ENCODE measurements at regions of chr2 and their contacts with region 1.

Region 1: GRCh38 chr2:85813982-85814801 is 60.4 kb downstream of the ATOH8 start:
- DNase-seq: peak; percentile 92
- H3K4me3 Mint-ChIP-seq: no peak overlapping the region
- H3K27ac Mint-ChIP-seq: no peak overlapping the region
- H3K4me1 Mint-ChIP-seq: no peaks in the 10 kb centered on the region
- H3K27me3 Mint-ChIP-seq: peaks cover 51% of the 10 kb centered on the region

Region 2: GRCh38 chr2:85577386-85578242 is 236.6 kb before region 1 on chr2 and contains the start of gene VAMP8:
- CTCF ChIA-PET with region 1: no interaction called
- DNase-seq: peak; percentile 80
- H3K4me3 Mint-ChIP-seq: peak within 1 kb of the TSS; percentile 95
- H3K27ac Mint-ChIP-seq: peak within 1 kb of the TSS; percentile 86
- H3K4me1 Mint-ChIP-seq: peaks cover 42% of the 10 kb centered on the region
- H3K27me3 Mint-ChIP-seq: peaks cover 27% of the 10 kb centered on the region

Region 3: GRCh38 chr2:85635636-85636035 is 178.6 kb before region 1 on chr2:
- CTCF ChIA-PET with region 1: interaction called, 39 read pairs
- DNase-seq: no peak
- H3K4me3 Mint-ChIP-seq: no peak overlapping the region
- H3K27ac Mint-ChIP-seq: peak overlapping the region; percentile 5
- H3K4me1 Mint-ChIP-seq: peaks cover 4% of the 10 kb centered on the region
- H3K27me3 Mint-ChIP-seq: no peaks in the 10 kb centered on the region

Region 4: DNA sequence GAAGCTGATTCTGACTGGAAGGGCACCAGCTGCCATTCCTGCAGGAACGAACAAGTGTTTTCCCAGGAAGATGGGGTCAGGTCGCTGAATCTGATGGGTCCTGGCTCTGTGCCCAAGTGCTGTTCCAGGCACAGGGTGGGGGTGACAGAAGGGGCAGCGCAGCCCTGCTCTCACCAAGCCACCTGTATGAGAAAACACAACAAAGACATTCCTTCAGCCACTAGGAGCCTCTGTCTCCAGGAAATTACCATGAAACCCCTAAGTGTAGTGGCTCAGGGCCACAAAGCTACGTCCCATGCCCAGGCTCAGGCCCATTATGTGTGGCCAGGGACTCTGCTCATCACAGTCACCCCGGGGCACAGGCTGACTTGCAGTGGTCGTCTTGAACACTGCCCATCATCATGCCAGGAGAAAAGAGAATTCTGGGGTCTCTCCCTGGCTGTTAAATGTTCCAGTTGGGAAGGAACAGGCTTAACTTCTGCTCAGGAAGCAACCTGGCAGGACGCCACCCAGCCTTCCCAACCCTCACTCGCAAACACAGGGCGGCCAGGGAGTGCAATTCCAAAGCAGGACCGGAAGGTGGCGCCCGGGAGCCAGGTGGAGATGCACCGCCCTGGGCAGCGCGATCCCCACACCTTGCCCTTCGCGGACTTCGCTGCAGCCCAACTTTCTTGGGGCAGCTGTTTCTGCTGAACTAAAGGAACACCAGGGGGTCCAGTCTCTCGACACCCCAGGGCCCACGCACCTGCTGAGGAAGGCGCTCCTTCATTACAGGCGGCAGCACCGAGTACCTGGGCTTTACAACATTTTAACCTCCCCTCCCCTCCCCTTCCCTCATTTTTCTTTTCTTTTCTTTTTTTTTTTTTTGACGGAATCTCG is 135.2 kb before region 1 on chr2:
- CTCF ChIA-PET with region 1: interaction called, 25 read pairs
- DNase-seq: peak; percentile 82
- H3K4me3 Mint-ChIP-seq: no peak overlapping the region
- H3K27ac Mint-ChIP-seq: no peak overlapping the region
- H3K4me1 Mint-ChIP-seq: peaks cover 20% of the 10 kb centered on the region
- H3K27me3 Mint-ChIP-seq: peaks cover 35% of the 10 kb centered on the region

Region 5: DNA sequence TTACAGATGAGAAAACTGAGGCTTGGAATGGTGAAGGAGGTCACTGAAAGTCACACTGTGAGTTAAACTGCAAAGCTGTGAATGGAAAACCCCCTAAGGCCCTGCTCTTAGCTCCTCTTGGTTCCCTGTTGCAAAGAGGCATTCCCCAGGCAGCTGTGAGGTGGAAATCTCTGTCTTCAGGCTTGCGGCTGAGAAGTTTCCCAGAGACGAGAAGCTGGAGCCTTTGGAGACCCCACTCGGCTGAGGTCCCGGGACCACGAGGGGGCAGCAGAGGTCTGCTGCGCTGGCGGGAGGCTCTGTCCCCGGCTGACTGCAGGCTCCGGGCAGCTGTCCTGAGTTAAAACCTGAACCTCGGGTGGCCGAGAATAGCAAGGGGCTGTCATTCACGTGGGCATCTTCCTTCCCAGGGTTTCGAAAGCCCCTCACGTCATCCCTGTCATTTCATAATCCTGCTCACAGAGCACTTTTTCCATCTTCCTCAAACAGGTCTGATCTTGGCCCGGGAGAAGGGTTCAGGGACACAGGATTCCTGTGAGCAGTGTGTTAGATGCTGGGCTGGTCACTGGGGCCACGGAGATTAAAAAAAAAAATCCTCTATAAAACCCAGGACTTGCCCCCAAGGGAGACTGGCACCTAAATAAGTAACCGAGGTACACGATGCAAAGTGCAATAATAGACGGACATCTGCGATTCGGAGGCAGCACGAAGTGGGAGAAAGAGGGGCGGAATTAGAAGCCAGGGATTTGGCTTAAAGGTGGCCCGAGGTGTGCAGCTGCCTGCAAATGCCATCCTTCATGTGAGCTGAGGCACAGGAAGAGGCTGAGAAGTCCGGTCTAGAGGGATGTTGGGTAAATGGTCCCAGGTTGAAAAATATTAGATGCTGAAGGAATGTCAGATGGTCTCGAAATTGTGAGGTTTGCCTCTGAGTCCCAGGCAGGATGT is 85.0 kb before region 1 on chr2:
- CTCF ChIA-PET with region 1: interaction called, 83 read pairs
- DNase-seq: peak; percentile 82
- H3K4me3 Mint-ChIP-seq: no peak overlapping the region
- H3K27ac Mint-ChIP-seq: no peak overlapping the region
- H3K4me1 Mint-ChIP-seq: peaks cover 3% of the 10 kb centered on the region
- H3K27me3 Mint-ChIP-seq: peaks cover 66% of the 10 kb centered on the region

Region 6: GRCh38 chr2:85750587-85751575 is 63.3 kb before region 1 on chr2:
- CTCF ChIA-PET with region 1: interaction called, 91 read pairs
- DNase-seq: peak; percentile 78
- H3K4me3 Mint-ChIP-seq: no peak overlapping the region
- H3K27ac Mint-ChIP-seq: no peak overlapping the region
- H3K4me1 Mint-ChIP-seq: peaks cover 17% of the 10 kb centered on the region
- H3K27me3 Mint-ChIP-seq: peaks cover 100% of the 10 kb centered on the region

Region 7: DNA sequence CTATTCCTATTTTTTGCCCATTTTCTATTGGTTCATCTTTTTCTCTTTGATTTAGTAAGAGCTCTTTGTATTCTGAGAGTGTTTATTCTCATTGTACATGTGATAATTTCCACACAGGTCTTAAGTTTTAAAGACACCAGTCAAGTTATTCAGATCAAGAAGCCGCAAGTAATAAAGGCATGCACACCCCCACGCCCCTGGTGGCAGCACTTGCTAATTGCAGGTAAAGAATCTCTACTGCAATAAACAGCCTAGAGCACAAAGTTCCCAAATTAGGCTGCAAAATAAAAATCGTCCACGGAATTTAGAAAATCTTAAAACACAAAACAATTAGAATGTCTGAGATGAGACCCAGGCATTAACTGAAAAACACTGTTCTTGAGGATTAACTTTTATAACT is 29.4 kb after region 1 on chr2:
- CTCF ChIA-PET with region 1: no interaction called
- DNase-seq: peak; percentile 44
- H3K4me3 Mint-ChIP-seq: no peak overlapping the region
- H3K27ac Mint-ChIP-seq: no peak overlapping the region
- H3K4me1 Mint-ChIP-seq: peaks cover 32% of the 10 kb centered on the region
- H3K27me3 Mint-ChIP-seq: no peaks in the 10 kb centered on the region

Region 8: DNA sequence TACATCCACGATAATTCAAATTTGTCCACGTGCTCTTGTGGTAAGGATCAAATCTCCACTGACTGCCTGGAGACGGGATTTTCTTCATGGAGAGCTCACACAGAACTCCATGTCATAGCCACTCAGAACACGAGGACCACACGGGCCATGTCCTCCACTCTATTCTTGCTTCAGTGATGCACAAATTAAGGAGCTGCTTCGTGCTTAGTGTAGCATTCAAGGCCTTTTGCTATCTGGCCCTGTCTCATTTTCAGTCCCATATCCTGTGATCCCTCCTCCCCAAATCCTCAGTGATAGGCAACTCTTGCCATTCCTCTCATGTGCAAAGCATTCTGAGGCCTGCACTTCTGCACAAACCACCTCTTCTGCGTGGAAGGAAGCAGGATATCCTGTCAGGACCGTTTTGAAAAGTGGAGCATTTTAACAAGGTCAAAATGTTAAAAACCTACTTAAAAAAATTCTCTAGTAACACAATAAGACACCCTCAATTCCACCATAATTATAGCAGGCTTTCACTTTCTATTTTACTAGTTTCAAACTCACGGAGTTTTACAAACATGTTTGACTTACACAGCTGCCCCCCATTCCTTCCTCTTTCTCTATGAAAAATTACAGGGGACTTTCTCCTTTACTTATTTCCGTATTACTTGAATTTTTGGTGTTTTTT is 39.4 kb after region 1 on chr2:
- CTCF ChIA-PET with region 1: no interaction called
- DNase-seq: peak; percentile 68
- H3K4me3 Mint-ChIP-seq: peak overlapping the region; percentile 80
- H3K27ac Mint-ChIP-seq: peak overlapping the region; percentile 100
- H3K4me1 Mint-ChIP-seq: peaks cover 71% of the 10 kb centered on the region
- H3K27me3 Mint-ChIP-seq: no peaks in the 10 kb centered on the region